ENCODE measurements at regions of chr14 and their contacts with region 1.

Region 1: DNA sequence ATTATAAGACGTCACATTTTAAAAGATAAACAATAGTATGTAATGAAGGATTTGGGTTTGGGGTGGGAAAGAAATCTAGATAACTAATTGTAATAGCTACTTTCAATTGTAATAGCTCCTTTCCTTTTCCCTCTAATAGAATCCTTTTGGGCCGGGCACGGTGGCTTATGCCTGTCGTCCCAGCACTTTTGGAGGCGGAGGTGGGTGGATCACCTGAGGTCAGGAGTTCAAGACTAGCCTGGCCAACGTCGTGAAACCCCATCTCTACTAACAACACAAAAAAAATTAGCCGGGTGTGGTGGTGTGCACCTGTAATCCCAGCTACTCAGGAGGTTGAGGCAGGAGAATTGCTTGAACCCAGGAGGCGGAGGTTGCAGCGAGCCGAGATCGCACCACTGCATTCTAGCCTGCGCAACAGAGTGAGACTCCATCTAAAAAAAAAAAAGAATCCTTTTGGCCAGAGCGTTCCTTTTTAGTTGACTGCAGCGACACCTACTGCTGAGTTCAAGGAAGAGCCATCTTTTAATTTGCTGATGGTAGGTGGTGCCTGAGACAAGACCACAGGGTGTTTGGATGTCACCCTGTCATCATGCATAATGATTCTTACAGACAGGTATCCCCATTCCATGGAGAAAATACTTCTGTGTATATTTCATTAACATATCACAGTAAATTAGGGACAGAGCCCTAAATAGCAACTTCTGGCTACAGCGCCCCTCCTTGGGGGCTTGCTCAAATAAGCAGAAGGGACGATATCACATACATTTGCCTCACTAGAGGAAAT is 79.5 kb downstream of the ARMH4 start:
- DNase-seq: peak; percentile 44
- H3K4me3 ChIP-seq: no peak overlapping the region
- H3K27ac ChIP-seq: no peak overlapping the region
- H3K4me1 ChIP-seq: peaks cover 13% of the 10 kb centered on the region
- H3K27me3 ChIP-seq: no peaks in the 10 kb centered on the region
- CTCF ChIP-seq: peak; percentile 61 to 73

Region 2: DNA sequence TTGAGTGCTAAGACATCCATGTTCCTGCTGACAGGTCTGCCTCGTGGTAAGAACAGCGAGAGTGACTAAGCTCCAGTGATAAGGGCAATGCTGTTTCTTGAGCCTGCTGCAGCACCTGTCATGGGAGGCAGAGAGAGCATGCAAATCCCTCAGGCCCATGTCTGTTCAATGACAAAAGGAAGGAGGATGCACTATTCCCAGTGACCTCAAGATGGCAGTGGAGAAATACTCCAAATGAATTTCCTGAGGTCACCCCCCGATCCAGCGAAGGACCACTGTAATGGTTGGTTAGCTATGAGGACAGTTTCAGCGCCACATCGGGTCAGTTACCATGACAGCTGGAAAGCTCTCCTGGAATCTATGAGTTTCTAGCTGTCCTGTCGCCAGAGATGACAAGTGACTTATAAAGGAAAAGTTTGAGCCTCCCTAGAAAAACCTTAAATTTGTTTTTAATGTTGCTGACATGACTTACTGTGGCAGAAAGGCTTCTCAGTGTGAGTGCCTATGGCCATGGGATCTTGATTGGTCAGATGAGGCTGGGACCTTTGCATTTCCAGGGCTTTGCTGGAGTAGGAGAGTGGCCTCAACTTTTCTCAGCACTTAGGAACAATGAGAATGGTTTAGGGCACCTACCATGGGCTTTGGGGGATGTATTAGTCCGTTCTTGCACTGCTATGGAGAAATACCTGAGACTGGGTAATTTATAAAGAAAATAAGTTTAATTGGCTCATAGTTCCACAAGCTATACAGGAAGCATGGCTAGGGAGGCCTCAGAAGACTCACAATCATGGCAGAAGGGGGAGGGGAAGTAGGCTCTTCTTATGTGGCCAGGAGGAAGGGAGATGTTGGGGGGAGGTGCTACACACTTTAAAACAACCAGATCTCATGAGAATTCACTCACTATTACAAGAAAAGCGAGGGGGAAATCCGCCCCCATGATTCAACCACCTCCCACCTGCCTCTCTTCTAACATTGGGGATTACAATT is 1580.9 kb before region 1 on chr14:
- CTCF ChIA-PET with region 1: interaction called, 3 read pairs
- dilution Hi-C with region 1: no loop called
- in situ Hi-C with region 1: no loop called
- intact Hi-C with region 1: loop called (anchors 10 kb)
- DNase-seq: peak; percentile 42
- H3K4me3 ChIP-seq: no peak overlapping the region
- H3K27ac ChIP-seq: no peak overlapping the region
- H3K4me1 ChIP-seq: peaks cover 16% of the 10 kb centered on the region
- H3K27me3 ChIP-seq: no peaks in the 10 kb centered on the region
- CTCF ChIP-seq: peak; percentile 60 to 76

Region 3: DNA sequence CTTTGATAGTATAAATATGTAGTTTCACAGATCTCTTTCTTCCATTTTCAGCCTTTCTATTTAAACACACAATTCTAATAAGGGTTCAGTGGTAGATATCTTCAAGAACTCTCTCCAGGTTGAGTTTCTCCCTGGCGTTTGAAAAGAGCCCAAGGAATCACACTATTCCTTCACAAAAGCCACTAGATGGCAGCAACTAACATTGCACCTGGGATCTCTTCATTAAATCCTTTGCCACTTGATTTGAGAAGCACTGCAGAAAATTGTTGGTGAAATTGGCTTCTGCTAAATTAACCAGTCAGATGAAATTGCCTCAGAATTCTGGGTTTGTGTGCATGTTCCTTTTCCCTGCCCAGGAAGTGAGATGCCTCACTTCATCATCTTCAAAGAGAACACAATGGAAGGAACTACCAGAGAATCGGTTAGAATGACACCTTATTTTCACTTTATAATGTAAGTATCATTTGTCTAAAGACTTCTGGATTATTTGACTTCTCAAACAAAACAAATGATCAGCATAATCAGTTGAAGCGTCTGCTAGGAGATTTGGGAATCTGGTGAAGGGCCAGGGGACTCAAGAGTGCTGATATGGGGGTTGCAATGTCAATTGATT is 585.6 kb before region 1 on chr14:
- CTCF ChIA-PET with region 1: interaction called, 6 read pairs
- dilution Hi-C with region 1: no loop called
- in situ Hi-C with region 1: loop called (anchors 10 kb)
- intact Hi-C with region 1: loop called (anchors 1 kb)
- DNase-seq: peak; percentile 32
- H3K4me3 ChIP-seq: no peak overlapping the region
- H3K27ac ChIP-seq: no peak overlapping the region
- H3K4me1 ChIP-seq: no peaks in the 10 kb centered on the region
- H3K27me3 ChIP-seq: no peaks in the 10 kb centered on the region
- CTCF ChIP-seq: peak; percentile 69 to 74

Region 4: GRCh38 chr14:57692671-57693070 is 379.8 kb before region 1 on chr14:
- CTCF ChIA-PET with region 1: no interaction called
- dilution Hi-C with region 1: no loop called
- in situ Hi-C with region 1: loop called (anchors 10 kb)
- intact Hi-C with region 1: loop called (anchors 1 kb)
- DNase-seq: peak; percentile 41
- H3K4me3 ChIP-seq: no peak overlapping the region
- H3K27ac ChIP-seq: no peak overlapping the region
- H3K4me1 ChIP-seq: no peaks in the 10 kb centered on the region
- H3K27me3 ChIP-seq: no peaks in the 10 kb centered on the region
- CTCF ChIP-seq: peak; percentile 65 to 68

Region 5: GRCh38 chr14:57871459-57872080 is 200.9 kb before region 1 on chr14:
- CTCF ChIA-PET with region 1: no interaction called
- dilution Hi-C with region 1: no loop called
- in situ Hi-C with region 1: no loop called
- intact Hi-C with region 1: loop called (anchors 1 kb)
- DNase-seq: peak; percentile 33
- H3K4me3 ChIP-seq: no peak overlapping the region
- H3K27ac ChIP-seq: no peak overlapping the region
- H3K4me1 ChIP-seq: no peaks in the 10 kb centered on the region
- H3K27me3 ChIP-seq: peaks cover 5% of the 10 kb centered on the region
- CTCF ChIP-seq: peak; percentile 72 to 86

Region 6: DNA sequence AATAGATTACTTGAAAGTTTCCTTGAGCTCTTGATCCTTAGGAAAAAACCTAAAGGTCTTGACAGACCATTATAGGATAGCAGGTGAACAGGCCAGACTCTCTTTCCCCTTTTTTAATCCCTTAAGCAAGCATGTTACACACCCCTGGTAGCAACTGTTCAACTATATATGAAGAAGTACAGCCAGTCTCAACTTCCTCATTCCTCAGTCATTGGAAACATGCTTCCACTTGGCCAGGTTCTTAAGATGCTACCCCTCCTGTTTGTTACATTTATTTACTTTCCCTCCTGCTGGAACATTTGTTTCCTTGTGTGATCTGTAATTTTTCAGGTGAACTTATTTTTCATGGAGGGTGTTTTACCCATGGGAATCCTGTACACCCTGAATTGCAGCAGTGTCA is 44.6 kb before region 1 on chr14:
- CTCF ChIA-PET with region 1: no interaction called
- dilution Hi-C with region 1: no loop called
- in situ Hi-C with region 1: no loop called
- intact Hi-C with region 1: no loop called
- DNase-seq: no peak
- H3K4me3 ChIP-seq: no peak overlapping the region
- H3K27ac ChIP-seq: no peak overlapping the region
- H3K4me1 ChIP-seq: no peaks in the 10 kb centered on the region
- H3K27me3 ChIP-seq: no peaks in the 10 kb centered on the region
- CTCF ChIP-seq: no peak

Region 7: GRCh38 chr14:58118097-58118815 is 45.8 kb after region 1 on chr14:
- CTCF ChIA-PET with region 1: no interaction called
- dilution Hi-C with region 1: no loop called
- in situ Hi-C with region 1: no loop called
- intact Hi-C with region 1: no loop called
- DNase-seq: no peak
- H3K4me3 ChIP-seq: no peak overlapping the region
- H3K27ac ChIP-seq: no peak overlapping the region
- H3K4me1 ChIP-seq: no peaks in the 10 kb centered on the region
- H3K27me3 ChIP-seq: no peaks in the 10 kb centered on the region
- CTCF ChIP-seq: no peak

Measured in mammary epithelial cell (primary cell).